ENCODE measurements at regions of chr2 and their contacts with region 1.

Region 1: DNA sequence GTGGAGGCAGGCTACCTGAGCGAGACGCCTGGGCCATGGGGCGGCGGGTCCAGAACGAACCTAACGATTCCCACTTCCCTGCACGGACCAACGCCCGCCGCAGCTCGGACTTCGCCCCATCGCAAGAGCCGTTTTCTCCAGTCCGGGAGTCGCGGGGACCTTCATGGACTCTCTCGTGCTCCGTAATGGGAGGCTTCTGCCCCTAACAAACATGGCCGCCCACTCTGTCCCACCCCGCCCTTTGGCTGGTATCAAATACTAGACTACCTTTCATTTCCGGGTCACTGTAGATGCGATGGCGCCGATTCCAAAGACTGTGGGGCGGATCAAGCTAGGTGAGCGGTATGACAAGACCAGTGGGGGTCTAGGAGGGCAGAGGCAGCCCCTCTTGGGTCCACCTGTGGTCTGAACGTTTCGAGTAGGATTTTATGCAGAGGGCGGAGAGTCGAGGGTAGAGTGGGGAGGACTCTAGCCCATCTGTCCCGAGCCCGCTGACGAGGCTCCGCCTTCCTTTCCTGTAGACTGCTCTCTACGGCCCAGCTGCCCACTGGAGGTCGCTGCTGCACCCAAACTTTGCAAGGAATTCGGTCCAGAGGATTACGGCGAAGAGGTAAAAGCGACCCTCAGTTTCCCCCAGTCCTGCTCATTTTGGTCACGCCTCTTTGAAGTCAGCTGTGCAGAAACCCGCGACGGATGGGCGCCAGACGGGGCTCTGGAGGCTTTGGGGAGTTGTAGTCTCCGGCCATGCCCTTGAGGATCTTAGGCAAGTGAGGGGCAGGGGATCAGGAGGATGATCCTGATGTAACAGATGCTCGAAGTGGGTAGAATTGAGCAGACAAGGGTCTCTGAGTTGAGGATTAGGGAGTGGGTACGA is at the starts of genes CCDC142 and TTC31:
- DNase-seq: peak; percentile 58
- H3K4me3 ChIP-seq: peak within 1 kb of the TSS; percentile 99
- CTCF ChIP-seq: peak; percentile 88

Region 2: GRCh38 chr2:74458132-74458925 is 24.7 kb before region 1 on chr2 and contains the start of gene WBP1:
- CTCF ChIA-PET with region 1: interaction called, 12 read pairs
- POLR2A ChIA-PET with region 1: interaction called, 10 read pairs
- DNase-seq: peak; percentile 100
- H3K4me3 ChIP-seq: peak within 1 kb of the TSS; percentile 74
- CTCF ChIP-seq: no peak

Region 3: GRCh38 chr2:74472086-74472944 is 10.7 kb before region 1 on chr2 and contains the start of gene MRPL53:
- CTCF ChIA-PET with region 1: interaction called, 32 read pairs
- POLR2A ChIA-PET with region 1: interaction called, 7 read pairs
- DNase-seq: peak; percentile 47
- H3K4me3 ChIP-seq: peak within 1 kb of the TSS; percentile 88
- CTCF ChIP-seq: no peak

Region 4: GRCh38 chr2:74498500-74499266 is 15.6 kb after region 1 on chr2:
- CTCF ChIA-PET with region 1: interaction called, 29 read pairs
- POLR2A ChIA-PET with region 1: interaction called, 6 read pairs
- DNase-seq: no peak
- H3K4me3 ChIP-seq: peak overlapping the region; percentile 43
- CTCF ChIP-seq: no peak

Region 5: GRCh38 chr2:74507145-74507925 is 24.3 kb after region 1 on chr2 and contains the start of gene PCGF1:
- CTCF ChIA-PET with region 1: interaction called, 27 read pairs
- POLR2A ChIA-PET with region 1: interaction called, 6 read pairs
- DNase-seq: peak; percentile 87
- H3K4me3 ChIP-seq: peak within 1 kb of the TSS; percentile 100
- CTCF ChIP-seq: peak; percentile 70

Region 6: DNA sequence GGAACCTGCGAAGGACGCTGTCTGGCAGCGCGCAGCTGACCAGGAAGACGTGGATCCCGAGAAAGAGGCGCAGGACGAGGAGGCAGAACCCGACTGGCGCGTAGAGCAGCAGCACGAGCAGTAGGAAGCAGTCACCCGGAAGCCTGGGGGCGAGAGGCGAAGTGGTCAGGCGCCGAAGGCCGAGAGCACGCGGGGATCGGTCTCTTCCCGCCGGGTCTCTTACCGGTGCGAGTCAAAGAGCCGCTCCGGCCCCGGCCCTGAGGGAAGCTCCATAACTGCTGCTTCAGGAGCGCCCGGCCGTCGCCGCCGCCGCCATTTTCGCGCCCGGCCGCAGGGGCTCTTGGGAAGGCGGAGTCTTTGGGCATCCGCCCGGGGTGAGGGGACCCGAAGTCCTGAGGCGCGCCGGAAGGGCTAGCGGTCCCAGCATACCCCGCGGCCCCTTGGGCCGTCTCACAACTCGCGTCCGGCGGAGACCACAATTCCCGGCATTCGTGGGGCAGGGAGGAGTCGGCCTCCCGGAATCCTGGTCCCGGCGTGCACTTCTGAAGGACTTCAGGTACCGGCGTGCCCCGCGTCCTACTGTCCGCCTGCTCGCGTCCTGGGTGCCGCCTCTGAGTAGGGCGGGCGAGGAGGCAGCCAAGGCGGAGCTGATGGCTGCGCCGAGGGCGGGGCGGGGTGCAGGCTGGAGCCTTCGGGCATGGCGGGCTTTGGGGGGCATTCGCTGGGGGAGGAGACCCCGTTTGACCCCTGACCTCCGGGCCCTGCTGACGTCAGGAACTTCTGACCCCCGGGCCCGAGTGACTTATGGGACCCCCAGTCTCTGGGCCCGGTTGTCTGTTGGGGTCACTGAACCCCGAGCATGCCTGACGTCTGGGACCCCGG is 46.6 kb after region 1 on chr2 and contains the starts of genes AUP1 and HTRA2:
- CTCF ChIA-PET with region 1: interaction called, 38 read pairs
- POLR2A ChIA-PET with region 1: interaction called, 8 read pairs
- DNase-seq: peak; percentile 93
- H3K4me3 ChIP-seq: peak within 1 kb of the TSS; percentile 99
- CTCF ChIP-seq: no peak

Region 7: DNA sequence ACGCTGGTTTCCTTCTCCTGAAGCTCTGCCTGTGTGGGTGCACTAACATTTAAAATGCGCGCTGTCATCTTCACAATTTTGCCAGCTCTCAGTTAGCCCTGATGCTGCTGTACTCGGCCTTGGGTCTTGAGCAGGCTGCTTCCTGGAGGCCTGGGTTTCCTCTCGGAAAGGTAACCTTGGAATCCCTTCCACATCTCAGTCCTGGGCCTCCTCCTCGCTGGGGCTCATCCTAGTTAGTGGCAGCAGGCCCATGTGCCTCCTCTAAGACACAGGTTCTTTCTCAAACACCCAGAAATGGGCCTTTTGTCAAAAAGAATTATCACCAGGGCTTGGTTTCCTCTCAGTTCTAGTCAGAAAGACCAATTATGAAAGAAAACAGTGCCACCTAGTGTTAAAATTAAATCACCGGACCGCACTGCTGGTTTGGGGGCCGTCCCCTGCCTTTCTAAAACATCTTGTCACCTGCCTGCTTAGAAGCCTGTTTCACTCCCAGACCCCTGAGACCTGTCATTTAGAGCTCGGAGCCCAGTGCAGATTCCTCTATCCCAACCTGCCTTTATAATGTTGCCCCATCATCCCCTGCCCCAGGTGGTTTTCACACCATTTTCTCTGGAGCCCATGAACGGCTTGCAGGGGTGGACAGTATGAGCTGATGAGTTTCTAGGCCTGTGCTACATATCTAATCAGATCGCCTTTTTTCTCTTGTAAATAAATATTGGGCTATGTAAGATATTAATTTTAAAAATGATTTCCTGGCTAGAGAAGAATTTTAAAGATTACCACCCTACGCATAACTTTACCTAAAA is 393.2 kb after region 1 on chr2:
- CTCF ChIA-PET with region 1: no interaction called
- POLR2A ChIA-PET with region 1: no interaction called
- DNase-seq: no peak
- H3K4me3 ChIP-seq: no peak overlapping the region
- CTCF ChIP-seq: peak; percentile 49